ENCODE measurements at regions of chr17 and their contacts with region 1.

Region 1: DNA sequence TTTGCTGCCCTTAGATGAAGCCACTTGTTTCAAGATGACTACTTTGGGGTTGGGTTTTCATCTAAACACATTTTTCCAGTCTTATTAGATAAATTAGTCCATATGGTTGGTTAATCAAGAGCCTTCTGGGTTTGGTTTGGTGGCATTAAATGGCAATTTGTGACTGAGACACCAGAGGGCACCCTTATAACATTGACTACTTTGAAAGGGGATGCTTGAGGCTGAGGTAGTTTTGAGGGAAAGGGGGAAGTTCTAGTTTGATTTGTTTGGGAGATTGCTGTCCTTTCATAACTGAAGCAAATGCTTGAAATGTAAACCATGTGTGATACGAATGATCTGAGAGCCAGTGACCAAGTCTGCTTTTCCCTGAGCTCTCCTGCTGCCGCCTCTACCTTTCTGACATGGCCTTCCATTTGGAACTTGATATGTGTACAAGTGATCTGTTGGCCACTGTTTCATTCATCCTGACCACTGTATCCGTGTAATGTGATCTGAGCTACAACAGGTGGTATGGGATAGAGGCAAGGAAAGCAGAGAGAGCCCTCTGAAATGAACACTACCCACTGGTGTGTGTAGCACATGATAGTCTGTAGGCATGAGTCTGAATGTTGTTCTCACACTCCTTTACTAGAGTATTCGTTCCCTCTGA is 5.8 kb upstream of the RARA start:
- DNase-seq: peak; percentile 69
- H3K4me3 ChIP-seq: no peak overlapping the region
- H3K27ac ChIP-seq: no peak overlapping the region
- H3K4me1 ChIP-seq: peaks cover 35% of the 10 kb centered on the region
- H3K27me3 ChIP-seq: no peaks in the 10 kb centered on the region
- CTCF ChIP-seq: peak; percentile 55 to 77 (median 75)
- POLR2A ChIP-seq: no peak

Region 2: DNA sequence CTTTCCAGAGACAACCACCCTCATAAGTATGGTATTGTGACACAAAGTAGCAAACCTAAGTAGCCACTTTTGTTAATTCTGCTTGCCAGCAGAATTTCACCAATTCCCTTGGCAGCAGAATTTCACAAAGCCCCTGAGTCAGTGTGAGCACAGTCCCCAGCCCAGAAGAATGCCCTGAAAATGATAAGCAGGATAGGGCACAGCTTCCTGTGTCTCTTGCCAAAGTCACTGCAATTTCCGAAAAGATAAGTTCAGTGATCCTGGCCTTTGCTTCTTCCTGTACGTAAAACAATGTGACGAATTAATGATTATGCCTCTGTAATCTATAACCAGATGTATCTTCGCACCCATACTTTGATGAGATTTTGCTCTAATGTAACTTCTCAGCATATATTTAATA is 100.0 kb before region 1 on chr17:
- intact Hi-C with region 1: no loop called
- DNase-seq: no peak
- H3K4me3 ChIP-seq: no peak overlapping the region
- H3K27ac ChIP-seq: no peak overlapping the region
- H3K4me1 ChIP-seq: peaks cover 8% of the 10 kb centered on the region
- H3K27me3 ChIP-seq: no peaks in the 10 kb centered on the region
- CTCF ChIP-seq: no peak
- POLR2A ChIP-seq: no peak

Region 3: DNA sequence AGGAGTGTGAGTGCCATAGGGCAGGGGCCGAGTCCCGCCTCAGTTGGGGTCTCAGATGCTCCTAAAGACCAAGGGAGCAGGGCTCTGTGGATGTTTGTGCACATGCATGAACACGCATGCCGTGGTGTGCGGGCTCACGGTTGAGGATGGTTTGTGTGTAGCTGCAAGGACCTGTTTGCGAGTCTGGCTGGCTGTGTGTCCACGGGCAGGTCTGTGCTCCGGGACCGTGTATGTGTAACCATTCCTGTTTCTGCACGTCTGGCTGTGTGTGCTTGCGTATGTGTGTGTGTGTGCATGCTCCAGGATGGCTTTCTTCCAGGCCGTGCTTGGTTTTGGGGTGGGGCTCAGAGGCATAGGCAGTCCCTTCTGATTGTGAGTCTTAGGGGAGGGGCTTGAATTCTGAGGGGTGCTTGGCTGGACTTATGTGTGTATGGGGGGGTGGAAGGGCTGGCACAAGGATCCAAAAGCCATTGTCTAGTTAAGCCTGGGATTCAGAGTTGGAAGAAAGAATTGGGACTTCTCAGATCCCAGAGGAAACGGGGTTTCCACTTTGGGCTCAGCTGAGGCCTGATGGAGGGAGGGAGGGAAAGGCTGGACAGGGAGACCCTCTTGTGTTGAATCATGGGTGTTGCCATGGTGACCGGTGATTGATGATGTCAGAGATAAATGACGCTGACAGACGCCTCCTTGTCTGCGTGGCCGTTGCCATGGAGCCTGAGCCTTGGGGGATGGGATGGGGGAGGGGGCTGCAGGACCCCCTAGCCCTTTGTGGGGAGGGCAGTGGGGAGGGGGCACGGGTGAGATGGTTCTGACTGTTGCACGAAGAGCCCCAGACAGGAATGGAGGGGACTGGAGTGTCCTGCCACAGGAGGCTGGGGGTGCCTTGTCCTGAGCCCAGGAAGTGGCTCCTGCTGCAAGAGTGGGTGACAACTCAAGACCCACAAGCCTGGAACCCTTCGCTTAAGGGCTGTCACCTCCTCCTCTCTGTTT is 47.1 kb after region 1 on chr17:
- intact Hi-C with region 1: loop called (anchors 5 kb)
- DNase-seq: no peak
- H3K4me3 ChIP-seq: no peak overlapping the region
- H3K27ac ChIP-seq: peak overlapping the region in 1 of 2 donors; percentile 97
- H3K4me1 ChIP-seq: peaks cover 71% of the 10 kb centered on the region
- H3K27me3 ChIP-seq: no peaks in the 10 kb centered on the region
- CTCF ChIP-seq: no peak
- POLR2A ChIP-seq: no peak

Region 4: GRCh38 chr17:40371261-40371929 is 68.3 kb after region 1 on chr17:
- intact Hi-C with region 1: no loop called
- DNase-seq: no peak
- H3K4me3 ChIP-seq: no peak overlapping the region
- H3K27ac ChIP-seq: no peak overlapping the region
- H3K4me1 ChIP-seq: no peaks in the 10 kb centered on the region
- H3K27me3 ChIP-seq: no peaks in the 10 kb centered on the region
- CTCF ChIP-seq: no peak
- POLR2A ChIP-seq: no peak

Region 5: GRCh38 chr17:40417609-40418427 is 114.7 kb after region 1 on chr17 and contains the start of gene TOP2A:
- intact Hi-C with region 1: loop called (anchors 10 kb)
- DNase-seq: peak; percentile 100
- H3K4me3 ChIP-seq: peak within 1 kb of the TSS; percentile 58 to 74
- H3K27ac ChIP-seq: peak within 1 kb of the TSS; percentile 42 to 74
- H3K4me1 ChIP-seq: peaks cover 6% of the 10 kb centered on the region
- H3K27me3 ChIP-seq: no peaks in the 10 kb centered on the region
- CTCF ChIP-seq: peak in 1 of 3 experiments; percentile 15
- POLR2A ChIP-seq: no peak
- total RNA-seq, gene TOP2A: 65.0 to 94.9 TPM

Measured in testis (tissue), 5 donors.